Left ventricle myocardium inferior (tissue), 1 donor: ENCODE measurements at regions of chr11 and their contacts with region 1.

Region 1: GRCh38 chr11:7986768-7987559 is at the start of gene EIF3F:
- DNase-seq: peak; percentile 84
- H3K4me3 ChIP-seq: peak within 1 kb of the TSS; percentile 83
- H3K27ac ChIP-seq: peak within 1 kb of the TSS; percentile 82
- H3K4me1 ChIP-seq: peaks cover 43% of the 10 kb centered on the region
- H3K27me3 ChIP-seq: no peaks in the 10 kb centered on the region
- CTCF ChIP-seq: peak; percentile 91
- total RNA-seq, gene EIF3F: 151 TPM

Region 2: GRCh38 chr11:7775689-7776088 is 211.3 kb before region 1 on chr11:
- intact Hi-C with region 1: no loop called
- DNase-seq: no peak
- H3K4me3 ChIP-seq: no peak overlapping the region
- H3K27ac ChIP-seq: no peak overlapping the region
- H3K4me1 ChIP-seq: no peaks in the 10 kb centered on the region
- H3K27me3 ChIP-seq: no peaks in the 10 kb centered on the region
- CTCF ChIP-seq: no peak

Region 3: DNA sequence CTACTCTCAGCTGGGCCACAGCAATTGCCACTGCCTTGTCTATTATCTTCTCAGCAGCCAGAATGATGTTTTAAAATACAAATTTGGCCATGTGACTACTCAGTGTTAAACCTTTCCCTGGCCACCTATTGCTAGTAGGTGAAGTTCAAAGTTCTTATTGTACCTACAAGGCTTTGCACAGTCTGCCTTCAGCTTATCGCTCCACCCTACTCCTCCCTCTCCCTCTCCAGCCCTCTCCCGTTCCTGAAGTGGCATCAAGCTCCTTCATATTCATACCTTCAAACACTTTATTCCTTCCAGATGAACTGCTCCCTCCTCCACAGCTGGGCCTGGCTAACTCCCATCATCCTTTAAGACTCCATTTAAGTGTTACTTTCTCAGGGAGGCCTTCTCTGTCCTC is 93.2 kb before region 1 on chr11:
- intact Hi-C with region 1: loop called (anchors 2 kb)
- DNase-seq: no peak
- H3K4me3 ChIP-seq: no peak overlapping the region
- H3K27ac ChIP-seq: no peak overlapping the region
- H3K4me1 ChIP-seq: peaks cover 6% of the 10 kb centered on the region
- H3K27me3 ChIP-seq: no peaks in the 10 kb centered on the region
- CTCF ChIP-seq: no peak

Region 4: GRCh38 chr11:8025816-8026215 is 38.9 kb after region 1 on chr11:
- intact Hi-C with region 1: no loop called
- DNase-seq: no peak
- H3K4me3 ChIP-seq: no peak overlapping the region
- H3K27ac ChIP-seq: no peak overlapping the region
- H3K4me1 ChIP-seq: peaks cover 15% of the 10 kb centered on the region
- H3K27me3 ChIP-seq: no peaks in the 10 kb centered on the region
- CTCF ChIP-seq: no peak

Region 5: DNA sequence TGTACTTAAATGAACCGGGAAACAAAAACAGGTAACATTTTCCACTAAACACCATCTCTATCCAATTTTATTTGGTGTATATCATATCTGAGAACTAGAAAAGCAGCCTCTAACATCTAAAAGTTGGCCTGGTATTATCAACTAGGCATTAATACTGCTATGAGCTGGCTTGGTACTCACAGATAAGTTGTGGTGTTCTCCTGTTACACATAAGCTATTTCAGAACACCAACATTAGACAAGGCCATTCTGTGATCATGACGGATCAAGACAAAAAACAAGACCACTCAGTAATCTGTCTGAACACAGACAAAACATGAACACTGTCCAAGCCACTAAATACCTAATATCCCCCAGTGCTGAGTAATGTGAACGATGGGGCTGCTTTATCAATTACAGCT is 169.9 kb after region 1 on chr11:
- intact Hi-C with region 1: no loop called
- DNase-seq: no peak
- H3K4me3 ChIP-seq: no peak overlapping the region
- H3K27ac ChIP-seq: peak overlapping the region; percentile 55
- H3K4me1 ChIP-seq: peaks cover 31% of the 10 kb centered on the region
- H3K27me3 ChIP-seq: no peaks in the 10 kb centered on the region
- CTCF ChIP-seq: no peak